ENCODE measurements at regions of chr6 and their contacts with region 1.

Region 1: DNA sequence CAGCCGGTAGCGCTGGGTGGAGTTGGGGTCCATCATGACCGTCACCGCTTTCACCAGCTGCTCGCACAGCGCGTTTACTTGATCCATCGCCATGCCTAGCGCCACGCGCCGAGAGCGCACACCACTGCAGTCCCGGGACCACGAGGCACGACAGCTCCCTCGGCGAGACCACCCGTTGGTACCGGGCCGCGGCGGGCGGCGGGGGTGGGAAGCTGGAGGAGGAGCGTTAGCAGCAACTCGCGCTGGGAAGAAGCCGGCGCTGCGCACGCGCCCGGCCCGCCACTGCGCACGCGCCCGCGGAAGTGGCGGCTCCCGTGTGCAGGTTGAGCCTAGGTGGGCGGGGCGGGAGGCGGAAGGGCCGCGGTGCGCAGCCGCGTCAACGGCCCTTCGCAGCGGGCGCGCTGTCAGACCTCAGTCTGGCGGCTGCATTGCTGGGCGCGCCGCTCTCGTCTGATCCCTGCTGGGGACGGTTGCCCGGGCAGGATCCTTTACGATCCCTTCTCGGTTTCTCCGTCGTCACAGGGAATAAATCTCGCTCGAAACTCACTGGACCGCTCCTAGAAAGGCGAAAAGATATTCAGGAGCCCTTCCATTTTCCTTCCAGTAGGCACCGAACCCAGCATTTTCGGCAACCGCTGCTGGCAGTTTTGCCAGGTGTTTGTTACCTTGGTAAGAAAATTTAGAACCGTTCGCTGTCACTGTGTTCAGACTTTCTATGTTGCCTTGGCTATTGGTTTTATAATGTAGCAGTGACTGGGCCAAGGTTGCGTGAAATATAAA is at the starts of genes POLH and XPO5:
- DNase-seq: peak; percentile 76 to 98 (median 87)

Region 2: GRCh38 chr6:43516697-43517504 is 59.1 kb before region 1 on chr6 and contains the starts of genes POLR1C and YIPF3:
- intact Hi-C with region 1: loop called (anchors 5 kb)
- DNase-seq: peak; percentile 92 to 99 (median 98)

Region 3: DNA sequence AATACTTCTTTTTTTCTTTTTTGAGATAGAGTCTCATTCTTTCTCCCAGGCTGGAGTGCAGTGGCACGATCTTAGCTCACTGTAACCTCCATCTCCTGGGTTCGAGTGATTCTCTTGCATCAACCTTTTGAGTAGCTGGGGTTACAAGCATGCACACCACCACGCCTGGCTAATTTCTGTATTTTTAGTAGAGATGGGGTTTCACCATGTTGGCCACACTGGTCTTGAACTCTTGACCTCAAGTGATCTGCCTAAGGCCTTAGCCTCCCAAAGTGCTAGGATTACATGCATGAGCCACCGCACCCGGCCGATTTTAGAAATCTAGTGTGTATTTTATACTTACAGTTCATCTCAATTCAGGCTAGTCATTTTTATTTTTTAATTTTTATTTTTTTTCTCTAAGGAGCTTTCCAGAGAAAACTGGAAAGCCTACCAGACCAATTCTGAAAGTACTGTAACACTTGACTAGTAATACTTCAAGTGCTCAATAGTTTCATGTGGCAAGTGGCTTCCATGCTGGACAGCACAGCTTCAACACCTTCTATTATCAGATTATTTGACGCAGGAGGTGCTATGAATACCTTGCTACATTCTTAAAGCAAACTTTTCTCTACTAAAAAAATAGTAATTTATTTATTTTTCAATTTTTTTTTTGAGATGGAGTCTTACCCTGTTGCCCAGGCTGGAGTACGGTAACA is 34.0 kb before region 1 on chr6:
- intact Hi-C with region 1: no loop called
- DNase-seq: no peak

Region 4: DNA sequence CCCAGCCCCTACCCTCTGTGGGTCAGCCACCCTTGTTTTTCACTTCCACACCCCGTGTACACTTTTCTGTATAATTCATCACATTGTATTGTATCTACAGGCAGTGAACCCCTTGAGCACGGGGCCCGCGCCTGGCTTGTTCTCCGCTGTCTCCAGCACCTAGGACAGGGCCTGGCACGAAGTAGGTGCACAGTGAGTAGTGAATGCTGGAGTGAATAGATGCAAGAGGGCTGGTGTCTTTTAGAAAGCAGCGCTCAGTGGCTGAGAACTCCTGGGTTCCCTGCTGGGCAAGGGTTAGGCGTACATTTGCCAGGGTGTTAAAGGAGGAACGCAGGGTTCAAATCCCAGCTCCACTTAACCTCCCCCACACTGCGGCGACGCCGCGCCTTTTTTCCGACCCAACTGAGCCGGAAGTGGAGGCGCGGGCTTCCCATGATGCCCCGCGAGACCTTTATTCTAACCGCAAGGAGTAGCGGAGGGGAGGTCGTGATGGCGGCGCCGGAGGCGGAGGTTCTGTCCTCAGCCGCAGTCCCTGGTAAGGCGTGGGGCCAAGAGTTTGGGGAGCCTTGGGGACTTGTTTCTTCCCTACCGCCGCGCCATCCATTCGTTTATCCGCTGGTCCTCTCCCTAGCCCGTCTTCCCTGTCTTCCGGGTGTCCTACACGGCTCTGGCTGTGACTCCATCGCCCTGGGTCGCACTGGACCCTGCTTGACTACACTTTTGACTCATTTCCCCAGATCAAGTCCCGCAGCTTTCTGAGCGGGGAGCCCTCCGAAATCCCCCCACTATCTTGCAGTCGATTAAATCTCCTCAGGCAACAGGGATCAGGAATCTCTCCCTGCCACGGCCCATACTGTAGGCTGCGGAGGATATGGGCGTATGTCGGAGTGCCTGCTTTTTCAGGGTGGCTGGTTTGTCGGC is 59.7 kb after region 1 on chr6 and contains the start of gene MAD2L1BP:
- intact Hi-C with region 1: loop called (anchors 5 kb)
- DNase-seq: peak; percentile 78 to 98 (median 87)

Measured in posterior cingulate gyrus (tissue), 11 donors.